Mammary epithelial cell (primary cell): ENCODE measurements at regions of chr2 and their contacts with region 1.

Region 1: DNA sequence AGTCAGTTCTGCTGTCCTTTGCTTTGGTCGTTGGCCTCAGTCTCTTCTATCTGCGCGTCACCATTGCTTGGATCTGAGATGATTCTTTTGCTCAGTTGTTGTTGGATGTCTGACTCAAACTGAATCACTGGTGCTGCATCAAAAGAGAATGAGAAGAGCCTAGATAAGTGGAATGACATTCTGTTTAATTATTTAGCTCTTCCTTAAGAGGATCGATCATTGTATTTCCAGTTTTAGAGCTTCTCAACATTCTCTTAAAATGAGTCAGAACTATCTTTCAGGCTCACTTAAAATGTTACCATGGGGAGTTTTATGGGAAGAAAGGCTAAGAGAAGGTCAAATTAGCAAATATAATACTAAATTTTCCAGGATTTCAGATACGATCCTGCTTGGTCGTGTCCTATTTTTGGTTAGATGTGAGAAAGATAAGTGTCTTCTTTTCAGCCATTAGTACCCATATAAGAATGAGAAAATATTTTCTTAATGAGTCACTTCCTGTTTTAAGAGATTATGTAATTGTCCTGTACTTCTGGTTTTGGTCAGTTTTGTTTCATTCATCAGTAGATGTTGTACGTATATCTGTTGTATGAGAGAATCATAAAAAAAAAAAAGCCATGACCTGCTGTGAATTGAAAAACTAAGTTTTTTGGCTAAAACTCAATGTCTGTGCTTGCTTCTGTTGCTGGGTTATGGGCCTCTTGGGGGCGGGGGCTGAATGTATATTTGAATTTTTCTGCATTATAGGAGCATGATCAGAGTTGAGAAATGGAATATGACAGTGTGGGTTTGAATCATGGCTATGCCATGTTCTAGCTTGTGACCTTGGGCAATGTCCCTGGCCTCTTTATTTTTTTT is 31.6 kb upstream of the CASP10 start:
- DNase-seq: peak; percentile 88
- H3K4me3 ChIP-seq: peak overlapping the region in 2 of 3 experiments; percentile 27 to 30
- H3K27ac ChIP-seq: peak overlapping the region; percentile 100
- H3K4me1 ChIP-seq: peaks cover 44% of the 10 kb centered on the region
- H3K27me3 ChIP-seq: no peaks in the 10 kb centered on the region
- CTCF ChIP-seq: no peak

Region 2: GRCh38 chr2:200985799-200986198 is 165.6 kb before region 1 on chr2:
- CTCF ChIA-PET with region 1: no interaction called
- dilution Hi-C with region 1: no loop called
- in situ Hi-C with region 1: no loop called
- intact Hi-C with region 1: no loop called
- DNase-seq: no peak
- H3K4me3 ChIP-seq: no peak overlapping the region
- H3K27ac ChIP-seq: no peak overlapping the region
- H3K4me1 ChIP-seq: no peaks in the 10 kb centered on the region
- H3K27me3 ChIP-seq: no peaks in the 10 kb centered on the region
- CTCF ChIP-seq: no peak

Region 3: DNA sequence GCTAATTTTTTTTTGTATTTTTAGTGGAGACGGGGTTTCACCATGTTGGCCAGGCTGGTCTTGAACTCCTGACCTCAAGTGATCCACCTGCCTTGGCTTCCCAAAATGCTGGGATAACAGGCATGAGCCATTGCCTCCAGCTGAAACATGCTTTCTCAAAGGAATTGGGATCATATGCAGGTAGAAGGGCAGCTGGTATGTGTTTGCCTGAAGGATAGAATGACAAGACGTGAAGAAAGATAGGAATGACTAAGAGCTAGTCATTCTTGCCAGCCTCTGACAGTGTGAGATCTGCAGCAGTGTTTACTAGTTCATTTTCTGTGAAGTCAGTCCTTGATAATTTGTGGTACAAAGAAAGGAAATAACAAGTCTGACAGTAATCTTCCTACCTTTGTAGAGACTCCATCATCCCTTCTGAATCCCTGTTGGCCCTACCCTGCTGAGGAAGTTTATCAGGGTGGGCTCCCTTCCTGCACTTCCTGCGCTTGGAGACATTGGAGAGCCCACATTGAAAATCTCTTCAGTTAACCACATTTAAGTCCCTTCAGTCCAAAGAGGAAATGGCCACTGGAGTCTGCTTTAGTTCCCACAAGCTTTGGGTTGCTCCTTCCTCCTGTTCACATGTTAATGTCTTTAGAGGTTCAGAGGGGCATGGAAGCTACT is 20.7 kb before region 1 on chr2:
- CTCF ChIA-PET with region 1: no interaction called
- dilution Hi-C with region 1: no loop called
- in situ Hi-C with region 1: no loop called
- intact Hi-C with region 1: loop called (anchors 1 kb)
- DNase-seq: peak; percentile 96
- H3K4me3 ChIP-seq: no peak overlapping the region
- H3K27ac ChIP-seq: peak overlapping the region; percentile 84
- H3K4me1 ChIP-seq: peaks cover 61% of the 10 kb centered on the region
- H3K27me3 ChIP-seq: no peaks in the 10 kb centered on the region
- CTCF ChIP-seq: no peak